ENCODE measurements at regions of chr10 and their contacts with region 1.

Region 1: GRCh38 chr10:110610308-110610774 is 33.8 kb upstream of the RBM20 start:
- DNase-seq: peak; percentile 10 to 14 (median 12)
- H3K4me3 ChIP-seq: no peak overlapping the region
- H3K4me3 Mint-ChIP-seq: no peak overlapping the region
- H3K27ac ChIP-seq: no peak overlapping the region
- H3K27ac Mint-ChIP-seq: peak overlapping the region in 1 of 7 donors; percentile 17
- H3K4me1 ChIP-seq: no peaks in the 10 kb centered on the region
- H3K4me1 Mint-ChIP-seq: peaks cover 7% of the 10 kb centered on the region
- H3K27me3 ChIP-seq: no peaks in the 10 kb centered on the region
- H3K27me3 Mint-ChIP-seq: no peaks in the 10 kb centered on the region
- CTCF ChIP-seq: peak; percentile 82

Region 2: GRCh38 chr10:111598436-111599059 is 988.2 kb after region 1 on chr10:
- intact Hi-C with region 1: loop called (anchors 10 kb)
- DNase-seq: peak; percentile 2 to 17 (median 14)
- H3K4me3 ChIP-seq: no peak overlapping the region
- H3K4me3 Mint-ChIP-seq: no peak overlapping the region
- H3K27ac ChIP-seq: no peak overlapping the region
- H3K27ac Mint-ChIP-seq: no peak overlapping the region
- H3K4me1 ChIP-seq: no peaks in the 10 kb centered on the region
- H3K4me1 Mint-ChIP-seq: no peaks in the 10 kb centered on the region
- H3K27me3 ChIP-seq: no peaks in the 10 kb centered on the region
- H3K27me3 Mint-ChIP-seq: peaks cover 2 to 4% (median 3%) of the 10 kb centered on the region in 3 donors
- CTCF ChIP-seq: peak; percentile 67